ENCODE measurements at regions of chr16 and their contacts with region 1.

Region 1: GRCh38 chr16:53130159-53131049 is 75.6 kb downstream of the CHD9 start:
- DNase-seq: peak; percentile 94 to 95
- ATAC-seq: peak; percentile 86 to 96 (median 90)
- H3K4me3 ChIP-seq: peak overlapping the region; percentile 97
- H3K4me3 Mint-ChIP-seq: peak overlapping the region; percentile 87
- H3K27ac ChIP-seq: peak overlapping the region; percentile 92
- H3K27ac Mint-ChIP-seq: peak overlapping the region; percentile 87 to 91
- H3K4me1 ChIP-seq: peaks cover 12% of the 10 kb centered on the region
- H3K4me1 Mint-ChIP-seq: peaks cover 9 to 18% of the 10 kb centered on the region in 2 donors
- H3K27me3 ChIP-seq: no peaks in the 10 kb centered on the region
- H3K27me3 Mint-ChIP-seq: no peaks in the 10 kb centered on the region
- CTCF ChIP-seq: peak; percentile 50

Region 2: GRCh38 chr16:53099318-53100130 is 30.9 kb before region 1 on chr16:
- intact Hi-C with region 1: loop called (anchors 5 kb)
- DNase-seq: peak; percentile 39 to 75
- ATAC-seq: peak; percentile 60 to 79 (median 79)
- H3K4me3 ChIP-seq: peak overlapping the region; percentile 29
- H3K4me3 Mint-ChIP-seq: peak overlapping the region; percentile 86
- H3K27ac ChIP-seq: peak overlapping the region; percentile 72
- H3K27ac Mint-ChIP-seq: peak overlapping the region; percentile 84 to 96
- H3K4me1 ChIP-seq: peaks cover 35% of the 10 kb centered on the region
- H3K4me1 Mint-ChIP-seq: peaks cover 16 to 35% of the 10 kb centered on the region in 2 donors
- H3K27me3 ChIP-seq: no peaks in the 10 kb centered on the region
- H3K27me3 Mint-ChIP-seq: no peaks in the 10 kb centered on the region
- CTCF ChIP-seq: no peak

Region 3: DNA sequence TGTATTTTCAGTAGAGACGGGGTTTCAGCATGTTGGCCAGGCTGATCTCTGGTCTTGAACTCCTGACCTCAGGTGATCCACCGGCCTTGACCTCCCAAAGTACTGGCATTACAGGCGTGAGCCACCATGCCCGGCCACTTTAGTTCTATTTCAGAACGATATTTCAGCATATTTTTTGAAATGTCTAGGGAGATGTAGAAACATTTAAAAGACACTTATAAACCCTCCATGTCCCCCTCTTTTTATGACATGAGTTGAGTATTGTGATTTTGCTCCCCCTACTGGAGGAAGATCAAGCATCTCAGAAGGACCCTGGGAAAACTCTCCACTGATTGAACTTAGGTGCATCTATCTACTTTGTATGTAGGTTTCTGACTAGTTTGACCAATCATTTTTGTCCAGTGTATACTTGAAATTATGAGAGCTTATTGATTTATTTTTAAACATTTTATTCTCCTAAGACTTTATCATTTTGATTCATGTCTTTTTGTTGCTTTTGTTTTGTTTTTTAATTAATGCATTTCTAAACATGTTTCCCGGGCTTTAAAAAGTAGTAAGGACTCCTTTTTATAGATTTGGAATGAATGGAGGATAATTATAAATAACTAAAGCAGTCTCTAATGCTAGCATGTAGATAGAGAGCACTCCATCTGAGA is 29.5 kb after region 1 on chr16:
- intact Hi-C with region 1: loop called (anchors 2 kb)
- DNase-seq: peak in 1 of 2 donors; percentile 81
- ATAC-seq: peak; percentile 72 to 76 (median 74)
- H3K4me3 ChIP-seq: no peak overlapping the region
- H3K4me3 Mint-ChIP-seq: no peak overlapping the region
- H3K27ac ChIP-seq: no peak overlapping the region
- H3K27ac Mint-ChIP-seq: no peak overlapping the region
- H3K4me1 ChIP-seq: no peaks in the 10 kb centered on the region
- H3K4me1 Mint-ChIP-seq: no peaks in the 10 kb centered on the region
- H3K27me3 ChIP-seq: no peaks in the 10 kb centered on the region
- H3K27me3 Mint-ChIP-seq: no peaks in the 10 kb centered on the region
- CTCF ChIP-seq: peak; percentile 84

Region 4: DNA sequence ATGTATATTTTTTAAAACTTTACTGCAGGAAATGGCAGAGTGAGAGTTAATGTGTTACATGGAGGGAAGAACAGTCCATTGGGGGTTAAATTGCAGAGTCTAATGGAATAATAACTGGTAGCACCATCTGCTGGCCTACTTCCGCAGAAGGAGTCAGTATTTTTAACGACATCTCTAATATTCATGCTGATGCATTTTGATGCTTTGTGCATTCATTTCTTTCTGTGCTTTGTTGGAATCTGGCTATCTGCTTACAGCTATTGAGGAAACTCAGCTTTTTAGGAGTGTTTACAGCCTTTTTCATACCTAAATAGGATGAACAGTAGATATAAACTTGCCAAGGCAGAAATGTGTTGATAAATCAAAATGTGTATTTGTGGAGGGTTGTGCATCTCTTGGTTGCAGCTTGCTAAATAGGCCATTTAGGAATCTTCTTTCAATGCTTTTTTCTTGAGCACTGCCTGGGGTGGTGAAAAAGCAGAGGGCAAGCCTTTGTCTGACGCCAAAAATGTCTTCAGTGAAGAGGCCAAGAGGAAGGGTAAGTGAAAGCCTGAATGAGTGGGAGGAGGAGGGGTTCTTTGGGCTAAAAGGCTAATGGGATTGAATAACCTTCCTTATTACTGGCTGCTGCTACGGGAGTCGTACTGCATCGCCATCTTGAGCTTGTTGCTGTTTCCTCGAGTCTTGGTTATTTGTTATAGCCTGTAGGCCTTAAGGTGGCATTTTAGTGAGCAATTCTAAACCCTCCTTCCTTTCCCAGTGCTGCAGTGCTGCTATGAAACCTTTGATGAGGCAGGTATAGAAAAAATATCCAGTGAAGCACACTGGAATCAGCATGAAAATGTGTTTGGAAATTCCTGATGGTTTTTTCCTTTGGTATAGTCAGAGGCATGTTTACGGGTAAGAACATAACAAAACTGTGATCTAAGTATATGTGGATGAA is 77.7 kb after region 1 on chr16:
- intact Hi-C with region 1: loop called (anchors 5 kb)
- DNase-seq: peak; percentile 26 to 59
- ATAC-seq: peak; percentile 82 to 84 (median 83)
- H3K4me3 ChIP-seq: peak overlapping the region; percentile 35
- H3K4me3 Mint-ChIP-seq: peak overlapping the region; percentile 90
- H3K27ac ChIP-seq: peak overlapping the region; percentile 77
- H3K27ac Mint-ChIP-seq: peak overlapping the region; percentile 87 to 99
- H3K4me1 ChIP-seq: peaks cover 8% of the 10 kb centered on the region
- H3K4me1 Mint-ChIP-seq: peaks cover 33 to 40% of the 10 kb centered on the region in 2 donors
- H3K27me3 ChIP-seq: no peaks in the 10 kb centered on the region
- H3K27me3 Mint-ChIP-seq: no peaks in the 10 kb centered on the region
- CTCF ChIP-seq: peak; percentile 55

Region 5: DNA sequence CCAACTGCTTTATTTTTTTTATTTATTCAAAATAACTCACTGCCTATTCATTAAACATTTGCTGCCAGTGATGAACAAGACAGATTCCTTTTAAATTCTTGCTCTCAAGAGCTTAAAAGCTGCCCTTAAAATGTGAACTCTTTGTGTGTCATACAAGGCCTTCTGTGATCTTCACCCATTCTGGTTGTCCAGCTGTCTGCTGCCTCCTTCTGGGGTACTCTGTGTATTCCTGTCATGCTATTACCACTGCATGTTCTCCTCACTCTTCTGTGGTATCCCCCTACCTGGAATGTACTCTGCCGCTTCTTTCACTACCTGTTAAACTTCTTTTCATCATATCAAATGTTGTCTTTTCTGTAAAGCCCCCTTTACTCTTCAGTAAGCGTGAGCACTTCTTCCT is 90.2 kb after region 1 on chr16:
- intact Hi-C with region 1: loop called (anchors 1 kb)
- DNase-seq: peak in 1 of 2 donors; percentile 46
- ATAC-seq: peak; percentile 76 to 93 (median 84)
- H3K4me3 ChIP-seq: no peak overlapping the region
- H3K4me3 Mint-ChIP-seq: no peak overlapping the region
- H3K27ac ChIP-seq: no peak overlapping the region
- H3K27ac Mint-ChIP-seq: no peak overlapping the region
- H3K4me1 ChIP-seq: no peaks in the 10 kb centered on the region
- H3K4me1 Mint-ChIP-seq: peaks cover 6 to 7% of the 10 kb centered on the region in 2 donors
- H3K27me3 ChIP-seq: no peaks in the 10 kb centered on the region
- H3K27me3 Mint-ChIP-seq: no peaks in the 10 kb centered on the region
- CTCF ChIP-seq: peak; percentile 32

Region 6: GRCh38 chr16:53503270-53503923 is 373.0 kb after region 1 on chr16:
- intact Hi-C with region 1: loop called (anchors 10 kb)
- DNase-seq: peak; percentile 99 to 100
- ATAC-seq: peak; percentile 90 to 98 (median 91)
- H3K4me3 ChIP-seq: peak overlapping the region; percentile 73
- H3K4me3 Mint-ChIP-seq: peak overlapping the region; percentile 92
- H3K27ac ChIP-seq: peak overlapping the region; percentile 87
- H3K27ac Mint-ChIP-seq: peak overlapping the region; percentile 96
- H3K4me1 ChIP-seq: peaks cover 29% of the 10 kb centered on the region
- H3K4me1 Mint-ChIP-seq: peaks cover 41 to 44% of the 10 kb centered on the region in 2 donors
- H3K27me3 ChIP-seq: no peaks in the 10 kb centered on the region
- H3K27me3 Mint-ChIP-seq: no peaks in the 10 kb centered on the region
- CTCF ChIP-seq: no peak

Measured in natural killer cell (primary cell).